Activated CD4-positive, alpha-beta memory T cell treated with anti-CD3 and anti-CD28 coated beads, Interleukin-2, amount 10 ng/mL, durations not matched to agents 7 days and 5 days (primary cell): ENCODE measurements at regions of chr22 and their contacts with region 1.

Region 1: DNA sequence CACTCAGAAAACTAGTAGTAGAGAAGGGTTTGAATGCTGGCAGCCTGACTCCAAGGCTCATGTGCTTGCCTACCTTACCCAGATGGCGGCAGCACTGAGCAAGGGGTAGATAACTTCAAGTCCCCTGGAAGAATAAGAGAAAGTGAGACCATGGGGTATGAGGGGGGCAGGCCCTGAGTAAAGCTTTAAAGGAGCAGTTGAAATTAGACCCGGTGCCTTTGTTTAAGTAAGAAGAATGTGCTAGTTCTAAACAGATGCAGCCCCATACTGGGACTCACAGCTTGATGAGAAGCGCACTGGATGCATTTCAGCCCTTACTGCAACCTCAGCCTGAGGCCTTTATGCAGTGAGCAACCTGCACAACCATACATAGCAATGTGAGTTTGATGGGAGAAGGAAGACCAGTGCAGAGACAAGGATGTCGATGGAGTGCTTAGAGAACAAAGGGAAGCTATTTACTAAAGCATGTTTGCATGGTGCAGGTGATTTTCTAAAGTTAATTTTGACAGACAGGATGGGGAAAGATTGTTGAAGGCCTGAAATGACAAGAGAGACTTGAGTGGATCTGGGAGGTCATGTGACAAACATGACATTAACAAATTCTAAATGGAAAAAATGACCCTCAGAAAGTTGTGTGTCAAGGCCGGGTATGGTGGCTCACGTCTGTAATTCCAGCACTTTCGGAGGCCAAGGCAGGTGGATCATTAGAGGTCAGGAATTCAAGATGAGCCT is 27.1 kb upstream of the TMA7B start:
- DNase-seq: peak; percentile 68
- H3K4me3 Mint-ChIP-seq: peak overlapping the region; percentile 42
- H3K27ac Mint-ChIP-seq: peak overlapping the region; percentile 73
- H3K4me1 Mint-ChIP-seq: peaks cover 56% of the 10 kb centered on the region
- H3K27me3 Mint-ChIP-seq: no peaks in the 10 kb centered on the region

Region 2: GRCh38 chr22:39900306-39901227 is 32.5 kb before region 1 on chr22 and contains the start of gene GRAP2:
- CTCF ChIA-PET with region 1: interaction called, 7 read pairs
- POLR2A ChIA-PET with region 1: interaction called, 447 read pairs
- DNase-seq: peak; percentile 86
- H3K4me3 Mint-ChIP-seq: peak within 1 kb of the TSS; percentile 87
- H3K27ac Mint-ChIP-seq: peak within 1 kb of the TSS; percentile 85
- H3K4me1 Mint-ChIP-seq: peaks cover 17% of the 10 kb centered on the region
- H3K27me3 Mint-ChIP-seq: no peaks in the 10 kb centered on the region
- total RNA-seq, gene GRAP2: 108 to 111 TPM

Region 3: GRCh38 chr22:39908737-39909136 is 24.3 kb before region 1 on chr22:
- CTCF ChIA-PET with region 1: interaction called, 15 read pairs
- POLR2A ChIA-PET with region 1: interaction called, 447 read pairs
- DNase-seq: peak; percentile 57
- H3K4me3 Mint-ChIP-seq: peak overlapping the region; percentile 87
- H3K27ac Mint-ChIP-seq: peak overlapping the region; percentile 85
- H3K4me1 Mint-ChIP-seq: peaks cover 68% of the 10 kb centered on the region
- H3K27me3 Mint-ChIP-seq: no peaks in the 10 kb centered on the region

Region 4: GRCh38 chr22:39917776-39918495 is 15.1 kb before region 1 on chr22:
- CTCF ChIA-PET with region 1: interaction called, 62 read pairs
- POLR2A ChIA-PET with region 1: interaction called, 447 read pairs
- DNase-seq: no peak
- H3K4me3 Mint-ChIP-seq: peak overlapping the region; percentile 68
- H3K27ac Mint-ChIP-seq: peak overlapping the region; percentile 85
- H3K4me1 Mint-ChIP-seq: peaks cover 90% of the 10 kb centered on the region
- H3K27me3 Mint-ChIP-seq: no peaks in the 10 kb centered on the region

Region 5: DNA sequence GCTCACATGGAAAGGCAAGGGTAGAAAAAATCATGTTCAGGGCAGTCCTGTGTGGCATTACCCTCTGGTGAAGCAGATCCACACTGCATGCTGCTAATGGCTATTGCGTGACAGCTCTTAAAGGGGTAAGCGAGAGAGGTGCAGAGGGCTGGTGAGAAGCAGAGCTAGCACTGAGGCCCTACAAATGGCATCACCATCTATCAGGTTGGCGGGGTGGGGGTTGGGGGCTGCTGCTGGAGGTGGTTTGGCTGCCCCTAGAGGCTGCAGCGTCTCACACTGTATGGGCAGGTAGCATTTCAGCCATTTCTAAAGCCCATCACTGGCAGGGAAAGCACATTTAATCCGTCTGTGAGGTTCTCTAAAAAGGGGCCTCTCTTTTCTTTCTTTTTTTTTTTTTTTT is 10.3 kb after region 1 on chr22:
- CTCF ChIA-PET with region 1: interaction called, 17 read pairs
- POLR2A ChIA-PET with region 1: interaction called, 14 read pairs
- DNase-seq: no peak
- H3K4me3 Mint-ChIP-seq: no peak overlapping the region
- H3K27ac Mint-ChIP-seq: peak overlapping the region; percentile 65
- H3K4me1 Mint-ChIP-seq: peaks cover 79% of the 10 kb centered on the region
- H3K27me3 Mint-ChIP-seq: no peaks in the 10 kb centered on the region